Esophagus muscularis mucosa (tissue), 4 donors: ENCODE measurements at regions of chr1 and their contacts with region 1.

Region 1: DNA sequence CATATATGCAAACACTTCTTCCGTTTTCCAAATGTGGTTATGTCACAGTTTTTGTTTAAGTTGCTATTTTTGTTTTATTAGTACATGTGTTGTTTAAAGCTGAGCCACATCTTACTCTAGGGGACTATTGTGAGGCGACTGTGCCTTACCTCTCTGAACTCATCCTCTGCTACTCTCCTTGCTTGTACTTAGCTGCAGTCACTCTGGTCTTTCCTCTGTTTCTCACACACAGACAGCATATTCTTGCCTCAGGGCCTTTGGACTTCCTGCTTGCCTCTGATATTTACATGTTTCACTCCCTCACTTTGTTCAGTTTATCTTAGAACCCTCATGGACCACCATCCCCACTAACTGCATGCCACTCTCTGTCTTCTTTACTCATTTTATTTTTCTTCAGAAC is 101.1 kb downstream of the MACF1 start:
- DNase-seq: no peak
- H3K4me3 ChIP-seq: no peak overlapping the region
- H3K27ac ChIP-seq: no peak overlapping the region
- H3K4me1 ChIP-seq: no peaks in the 10 kb centered on the region
- H3K27me3 ChIP-seq: no peaks in the 10 kb centered on the region
- CTCF ChIP-seq: no peak
- EP300 ChIP-seq: no peak
- POLR2A ChIP-seq: no peak

Region 2: DNA sequence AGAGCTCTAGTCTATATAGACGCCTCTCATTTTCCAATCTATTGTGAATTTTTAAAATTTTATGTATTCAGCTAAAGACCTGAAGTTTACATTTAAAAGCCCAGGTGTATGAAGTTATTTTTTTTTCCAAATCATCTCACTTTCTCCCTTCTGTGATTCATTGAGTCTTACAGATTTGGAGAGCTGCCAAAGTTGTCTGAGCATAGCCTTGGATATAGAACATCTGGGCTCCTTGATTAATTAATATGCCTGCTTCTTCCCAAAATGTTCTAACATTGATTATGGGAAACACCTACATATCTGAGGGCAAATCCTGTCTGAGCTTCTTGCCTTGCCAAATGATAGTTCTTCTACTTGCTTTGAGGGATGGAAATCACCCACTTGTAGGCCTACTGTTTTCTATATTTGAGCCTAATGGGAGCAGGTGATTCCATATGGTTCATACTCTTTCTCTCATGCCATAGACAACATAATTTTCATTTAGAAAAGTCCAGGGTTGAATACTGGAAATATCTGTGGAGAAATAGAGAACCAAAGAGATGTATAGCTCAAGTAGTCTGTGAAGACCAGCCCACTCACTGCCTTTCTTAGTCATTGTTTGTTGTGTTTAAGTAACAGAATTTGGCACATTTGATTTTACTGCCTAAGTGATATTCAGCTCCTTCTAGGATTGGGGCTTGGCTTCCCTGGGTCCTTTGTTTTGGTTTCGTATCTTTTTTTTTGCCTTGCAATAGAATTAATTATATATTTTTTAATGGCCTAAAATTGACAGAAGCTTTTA is 54.9 kb before region 1 on chr1:
- intact Hi-C with region 1: loop called (anchors 2 kb)
- DNase-seq: no peak
- H3K4me3 ChIP-seq: no peak overlapping the region
- H3K27ac ChIP-seq: peak overlapping the region in 1 of 4 donors; percentile 9
- H3K4me1 ChIP-seq: peaks cover 16 to 63% (median 51%) of the 10 kb centered on the region in 4 donors
- H3K27me3 ChIP-seq: no peaks in the 10 kb centered on the region
- CTCF ChIP-seq: no peak
- EP300 ChIP-seq: no peak
- POLR2A ChIP-seq: no peak